Activated B cell treated with CpG ODN at 0.5 μM for 24 hours (primary cell): ENCODE measurements at regions of chr7 and their contacts with region 1.

Region 1: DNA sequence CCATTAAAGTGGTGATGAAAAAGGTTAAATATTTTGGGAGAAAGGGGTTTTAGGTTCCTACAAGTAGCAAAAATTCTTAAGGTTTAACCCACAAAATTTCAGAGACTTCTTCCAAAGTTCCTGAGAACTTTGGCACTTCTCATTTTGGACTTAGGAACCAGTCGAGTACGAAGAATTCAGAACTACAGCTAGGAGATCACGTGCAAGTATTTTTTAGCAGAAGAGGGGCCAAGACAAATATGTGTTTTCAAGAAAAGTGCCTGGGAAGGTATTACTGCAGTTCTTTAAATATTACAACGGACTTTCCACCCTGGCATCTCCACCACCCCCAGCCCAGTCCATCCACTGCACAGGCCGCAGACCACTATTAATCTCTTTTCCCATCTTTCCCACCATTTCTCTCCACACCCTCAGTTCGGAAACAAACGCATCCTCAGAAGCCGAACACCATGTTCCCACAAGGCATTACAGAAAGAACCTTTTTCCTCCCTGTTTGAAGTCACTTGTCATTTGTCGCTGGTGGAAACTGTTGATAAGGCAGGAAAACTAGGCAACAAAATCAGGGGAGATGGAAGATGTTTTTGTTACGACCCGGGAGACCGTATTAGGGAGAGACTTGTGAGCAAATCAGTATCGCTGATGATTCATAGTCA is 7.1 kb downstream of the INHBA start:
- DNase-seq: no peak
- ATAC-seq: no peak
- H3K4me3 Mint-ChIP-seq: no peak overlapping the region
- H3K27ac Mint-ChIP-seq: no peak overlapping the region
- H3K4me1 Mint-ChIP-seq: peaks cover 15% of the 10 kb centered on the region
- H3K27me3 Mint-ChIP-seq: peaks cover 31% of the 10 kb centered on the region
- CTCF ChIP-seq: no peak

Region 2: DNA sequence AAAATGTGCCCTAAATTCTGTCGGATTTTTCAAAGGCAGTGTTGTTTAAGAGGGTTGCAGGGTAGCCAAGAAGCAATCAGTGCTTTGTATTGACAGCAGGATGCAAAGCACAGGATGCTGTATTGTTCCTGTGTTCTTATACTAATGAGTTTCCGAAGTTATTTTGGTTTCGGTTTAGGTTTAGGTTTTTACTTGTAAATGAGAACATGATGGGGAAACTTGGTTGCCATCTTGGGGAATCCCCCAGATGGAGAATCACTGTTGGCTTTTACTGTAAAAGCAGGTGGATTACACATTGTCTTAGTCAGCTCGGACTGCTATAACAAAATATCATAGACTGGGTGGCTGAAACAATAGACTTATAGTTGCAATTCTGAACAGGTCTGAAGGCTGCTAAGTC is 65.0 kb before region 1 on chr7:
- CTCF ChIA-PET with region 1: no interaction called
- POLR2A ChIA-PET with region 1: no interaction called
- intact Hi-C with region 1: loop called (anchors 2 kb)
- DNase-seq: no peak
- ATAC-seq: peak; percentile 71
- H3K4me3 Mint-ChIP-seq: peak overlapping the region; percentile 18
- H3K27ac Mint-ChIP-seq: no peak overlapping the region
- H3K4me1 Mint-ChIP-seq: peaks cover 12% of the 10 kb centered on the region
- H3K27me3 Mint-ChIP-seq: no peaks in the 10 kb centered on the region
- CTCF ChIP-seq: no peak

Region 3: DNA sequence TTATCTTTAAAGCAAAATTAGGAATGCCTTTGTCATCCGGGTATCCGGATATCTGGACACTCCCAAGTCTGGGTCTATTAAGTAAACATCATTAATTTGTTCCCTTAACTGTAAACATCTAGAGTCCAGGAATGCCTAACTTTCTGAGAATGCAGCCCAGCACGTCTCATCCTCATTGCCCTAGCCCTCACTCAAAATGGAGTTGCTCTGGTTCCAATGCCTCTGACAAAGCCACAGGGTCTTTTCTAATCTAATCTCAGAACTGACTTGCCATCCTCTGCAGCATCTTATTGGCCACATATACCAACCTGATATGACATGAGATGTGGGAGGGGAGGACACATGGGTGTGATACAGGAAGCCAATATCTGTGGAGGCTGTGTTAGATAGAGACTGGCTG is 22.6 kb before region 1 on chr7:
- CTCF ChIA-PET with region 1: no interaction called
- POLR2A ChIA-PET with region 1: no interaction called
- intact Hi-C with region 1: no loop called
- DNase-seq: no peak
- ATAC-seq: no peak
- H3K4me3 Mint-ChIP-seq: no peak overlapping the region
- H3K27ac Mint-ChIP-seq: no peak overlapping the region
- H3K4me1 Mint-ChIP-seq: no peaks in the 10 kb centered on the region
- H3K27me3 Mint-ChIP-seq: peaks cover 11% of the 10 kb centered on the region
- CTCF ChIP-seq: no peak